ENCODE measurements at regions of chrX and their contacts with region 1.

Region 1: GRCh38 chrX:1453951-1454785 is 1.5 kb upstream of the ASMTL start:
- DNase-seq: peak; percentile 73 to 86
- H3K4me3 ChIP-seq: peak overlapping the region; percentile 41 to 98 (median 77)
- H3K27ac ChIP-seq: peak overlapping the region in 1 of 2 donors; percentile 77
- H3K4me1 ChIP-seq: no peaks in the 10 kb centered on the region
- H3K27me3 ChIP-seq: no peaks in the 10 kb centered on the region
- CTCF ChIP-seq: peak; percentile 76 to 91 (median 83)
- POLR2A ChIP-seq: no peak

Region 2: DNA sequence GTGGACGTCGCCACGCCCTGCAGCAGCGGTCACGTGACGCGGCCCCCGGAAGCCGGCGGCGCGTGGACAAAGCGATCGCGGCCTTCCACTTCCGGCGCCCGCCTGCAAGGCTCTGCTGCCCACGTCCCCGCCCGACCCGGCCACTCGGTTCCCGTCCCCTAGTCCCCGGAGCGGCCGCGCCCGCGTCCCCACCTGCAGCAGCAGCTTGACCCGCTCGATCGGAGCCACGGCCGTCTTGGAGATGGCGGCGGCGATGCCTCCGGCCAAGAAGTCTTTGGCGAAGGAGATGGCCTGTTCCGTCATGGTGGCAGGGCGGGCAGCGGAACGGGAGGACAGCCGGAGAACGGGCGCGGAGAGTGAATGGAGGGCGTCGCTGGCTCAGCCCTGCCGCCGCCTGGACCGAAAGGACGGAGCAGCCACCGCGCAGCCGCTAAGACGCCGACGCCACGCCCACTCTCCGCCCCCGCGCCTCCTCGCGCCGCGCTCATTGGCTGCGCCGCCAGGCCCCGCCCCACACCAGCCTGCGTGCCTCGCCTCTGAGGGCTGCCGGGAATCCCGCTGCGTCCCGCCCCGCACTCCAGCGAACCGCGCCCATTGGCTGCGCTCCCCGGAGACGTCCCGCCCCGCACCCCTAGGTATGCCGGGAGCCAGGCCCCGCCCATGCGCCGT is 62.3 kb before region 1 on chrX and contains the start of gene SLC25A6:
- intact Hi-C with region 1: loop called (anchors 5 kb)
- DNase-seq: peak; percentile 98 to 99
- H3K4me3 ChIP-seq: peak within 1 kb of the TSS; percentile 86 to 99 (median 97)
- H3K27ac ChIP-seq: peak within 1 kb of the TSS; percentile 97 to 99
- H3K4me1 ChIP-seq: peaks cover 0 to 9% of the 10 kb centered on the region in 2 donors
- H3K27me3 ChIP-seq: no peaks in the 10 kb centered on the region
- CTCF ChIP-seq: peak; percentile 39 to 53 (median 39)
- POLR2A ChIP-seq: peak; percentile 58
- total RNA-seq, gene SLC25A6: 306 to 401 (median 351) TPM

Region 3: GRCh38 chrX:3184176-3184930 is 1730.2 kb after region 1 on chrX:
- intact Hi-C with region 1: no loop called
- DNase-seq: peak in 1 of 2 donors; percentile 21
- H3K4me3 ChIP-seq: no peak overlapping the region
- H3K27ac ChIP-seq: peak overlapping the region; percentile 52 to 74
- H3K4me1 ChIP-seq: no peaks in the 10 kb centered on the region
- H3K27me3 ChIP-seq: peaks cover 0 to 3% of the 10 kb centered on the region in 2 donors
- CTCF ChIP-seq: no peak
- POLR2A ChIP-seq: no peak

Measured in breast epithelium (tissue), 4 donors.